ENCODE measurements at regions of chr10 and their contacts with region 1.

Region 1: GRCh38 chr10:6072215-6072934 is 10.2 kb upstream of the IL2RA start:
- DNase-seq: peak; percentile 81
- H3K4me3 Mint-ChIP-seq: peak overlapping the region; percentile 70
- H3K27ac Mint-ChIP-seq: peak overlapping the region; percentile 98
- H3K4me1 Mint-ChIP-seq: peaks cover 81% of the 10 kb centered on the region
- H3K27me3 Mint-ChIP-seq: no peaks in the 10 kb centered on the region

Region 2: GRCh38 chr10:6045314-6045848 is 27.0 kb before region 1 on chr10:
- intact Hi-C with region 1: loop called (anchors 1 kb)
- DNase-seq: peak; percentile 82
- H3K4me3 Mint-ChIP-seq: peak overlapping the region; percentile 80
- H3K27ac Mint-ChIP-seq: peak overlapping the region; percentile 95
- H3K4me1 Mint-ChIP-seq: peaks cover 76% of the 10 kb centered on the region
- H3K27me3 Mint-ChIP-seq: no peaks in the 10 kb centered on the region

Region 3: GRCh38 chr10:6128591-6129251 is 56.3 kb after region 1 on chr10:
- intact Hi-C with region 1: no loop called
- DNase-seq: no peak
- H3K4me3 Mint-ChIP-seq: peak overlapping the region; percentile 70
- H3K27ac Mint-ChIP-seq: peak overlapping the region; percentile 94
- H3K4me1 Mint-ChIP-seq: peaks cover 36% of the 10 kb centered on the region
- H3K27me3 Mint-ChIP-seq: no peaks in the 10 kb centered on the region

Region 4: DNA sequence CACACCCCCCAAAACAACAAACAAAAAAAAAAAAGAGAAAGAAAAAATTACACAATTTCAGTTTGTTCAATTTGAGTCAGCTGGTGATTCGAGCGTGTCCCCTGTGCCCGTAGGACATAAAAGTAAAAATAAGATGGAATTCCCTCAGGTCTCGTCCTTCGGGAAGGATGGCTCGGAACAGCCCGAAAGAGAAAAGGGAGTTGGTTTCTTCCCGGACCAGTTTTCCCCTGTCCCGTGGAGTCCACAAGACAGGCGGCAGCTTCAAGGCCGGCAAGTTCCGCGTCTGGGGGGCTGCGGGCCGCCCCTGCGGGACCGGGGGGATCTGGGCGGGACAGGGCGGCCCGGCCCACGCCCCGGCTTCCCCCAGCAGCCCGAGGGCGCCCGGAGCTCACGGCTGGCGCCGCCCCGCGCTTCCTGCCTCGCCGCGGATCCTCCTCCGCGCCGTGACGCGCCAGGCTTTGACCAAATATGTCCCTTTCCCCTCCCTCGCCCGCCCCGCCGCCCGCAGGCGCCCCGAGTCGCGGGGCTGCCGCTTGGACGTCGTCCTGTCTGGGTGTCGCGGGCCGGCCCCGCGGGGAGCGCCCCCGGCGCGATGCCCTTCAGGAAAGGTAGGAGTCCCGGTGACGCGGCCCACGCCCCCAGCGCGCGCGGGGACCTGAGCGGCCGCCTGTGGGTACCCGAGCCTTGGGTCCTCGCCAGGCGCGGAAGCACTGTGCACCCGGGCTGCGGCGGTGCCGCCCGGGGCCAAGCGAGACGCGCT is 72.2 kb after region 1 on chr10:
- intact Hi-C with region 1: no loop called
- DNase-seq: peak; percentile 98
- H3K4me3 Mint-ChIP-seq: peak overlapping the region; percentile 89
- H3K27ac Mint-ChIP-seq: peak overlapping the region; percentile 81
- H3K4me1 Mint-ChIP-seq: peaks cover 73% of the 10 kb centered on the region
- H3K27me3 Mint-ChIP-seq: no peaks in the 10 kb centered on the region